Activated CD4-positive, alpha-beta T cell treated with anti-CD3 and anti-CD28 coated beads for 36 hours (primary cell): ENCODE measurements at regions of chr1 and their contacts with region 1.

Region 1: DNA sequence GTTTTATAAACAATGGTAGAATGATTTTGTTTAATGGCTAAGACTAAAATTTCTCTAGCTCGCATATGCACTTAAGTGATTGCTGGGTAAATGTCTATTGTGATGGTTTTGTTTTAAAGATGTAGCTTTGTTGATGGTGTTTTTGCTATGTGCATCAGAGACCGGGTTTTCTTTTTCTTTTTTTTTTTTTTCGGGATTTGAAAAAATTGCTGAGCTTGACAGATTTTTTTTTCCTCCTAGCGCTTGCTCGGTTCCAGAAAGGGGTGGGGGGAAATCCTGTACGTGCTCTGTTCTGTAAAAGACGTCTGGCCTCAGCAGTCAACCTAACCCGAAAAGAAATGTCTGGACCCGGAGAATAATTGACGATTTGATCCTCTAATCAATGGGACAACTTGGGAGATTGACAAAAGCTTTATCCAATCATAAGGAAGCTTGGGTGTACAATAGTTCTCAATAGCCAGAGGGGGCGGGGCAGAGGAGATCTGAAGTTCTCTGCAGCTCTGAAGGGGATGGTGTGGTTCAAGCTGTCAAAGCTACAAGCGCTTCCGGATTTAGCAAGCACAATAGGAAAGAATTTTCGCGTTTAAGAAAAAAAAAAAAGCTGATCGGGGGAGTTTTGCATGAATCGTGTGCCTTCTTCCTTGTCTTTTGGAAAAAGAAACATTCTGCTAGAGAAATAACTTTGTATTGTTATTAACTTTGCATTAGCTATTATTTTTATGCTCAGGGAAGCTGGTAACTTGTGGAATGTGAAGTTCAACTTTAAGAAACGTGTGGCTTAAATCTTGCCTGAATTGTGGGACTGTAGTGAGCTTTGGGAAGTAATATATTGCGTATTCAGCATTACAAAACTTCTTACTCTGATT is 4.5 kb upstream of the NFIA start:
- DNase-seq: peak; percentile 95
- ATAC-seq: peak; percentile 85
- H3K4me3 Mint-ChIP-seq: peak overlapping the region; percentile 83
- H3K27ac Mint-ChIP-seq: peak overlapping the region; percentile 90
- H3K4me1 Mint-ChIP-seq: peaks cover 49% of the 10 kb centered on the region
- H3K27me3 Mint-ChIP-seq: peaks cover 7% of the 10 kb centered on the region

Region 2: DNA sequence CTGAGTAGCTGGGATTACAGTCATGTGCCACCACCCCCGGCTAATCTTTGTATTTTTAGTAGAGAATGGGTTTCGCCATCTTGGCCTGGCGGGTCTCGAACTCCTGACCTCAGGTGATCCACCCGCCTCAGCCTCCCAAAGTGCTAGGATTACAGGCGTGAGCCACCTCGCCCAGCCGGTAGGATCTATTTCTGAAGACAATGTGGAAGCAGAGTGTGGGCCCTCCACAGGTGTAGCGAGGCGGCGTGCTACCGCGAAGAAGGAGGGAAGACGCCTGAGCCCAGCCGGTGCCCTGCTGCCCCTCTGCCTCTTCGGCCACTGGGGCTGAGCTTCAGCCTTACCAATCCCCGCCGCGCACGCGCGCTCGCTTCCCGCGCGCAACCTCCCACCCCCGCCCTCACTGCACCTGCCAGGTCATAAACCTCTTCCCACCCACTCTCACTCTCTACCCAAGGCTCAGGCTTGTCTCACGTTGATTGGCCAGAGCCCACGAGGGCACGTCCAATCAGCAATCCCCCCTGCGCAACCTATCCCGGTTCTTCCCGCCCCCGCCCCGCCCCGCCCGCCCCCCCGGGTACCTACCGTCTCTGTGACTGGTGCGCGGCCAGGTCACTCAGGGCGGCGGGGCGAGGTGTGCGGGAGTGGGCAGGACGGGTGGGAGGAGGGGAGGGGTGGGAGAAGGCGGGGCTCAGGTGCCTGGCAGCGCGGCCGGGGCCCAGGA is 1263.6 kb before region 1 on chr1:
- CTCF ChIA-PET with region 1: no interaction called
- POLR2A ChIA-PET with region 1: no interaction called
- intact Hi-C with region 1: loop called in 1 of 2 experiments (anchors 10 kb)
- DNase-seq: peak; percentile 92
- ATAC-seq: peak; percentile 96
- H3K4me3 Mint-ChIP-seq: no peak overlapping the region
- H3K27ac Mint-ChIP-seq: peak overlapping the region; percentile 73
- H3K4me1 Mint-ChIP-seq: peaks cover 8% of the 10 kb centered on the region
- H3K27me3 Mint-ChIP-seq: peaks cover 5% of the 10 kb centered on the region

Region 3: GRCh38 chr1:61270761-61271411 is 193.0 kb after region 1 on chr1:
- CTCF ChIA-PET with region 1: interaction called, 3 read pairs
- POLR2A ChIA-PET with region 1: interaction called, 6 read pairs
- intact Hi-C with region 1: loop called (anchors 2 kb)
- DNase-seq: peak; percentile 49
- ATAC-seq: peak; percentile 86
- H3K4me3 Mint-ChIP-seq: no peak overlapping the region
- H3K27ac Mint-ChIP-seq: peak overlapping the region; percentile 76
- H3K4me1 Mint-ChIP-seq: peaks cover 40% of the 10 kb centered on the region
- H3K27me3 Mint-ChIP-seq: peaks cover 5% of the 10 kb centered on the region

Region 4: GRCh38 chr1:61332196-61332753 is 254.4 kb after region 1 on chr1:
- CTCF ChIA-PET with region 1: no interaction called
- POLR2A ChIA-PET with region 1: no interaction called
- intact Hi-C with region 1: loop called in 1 of 2 experiments (anchors 5 kb)
- DNase-seq: peak; percentile 40
- ATAC-seq: peak; percentile 94
- H3K4me3 Mint-ChIP-seq: no peak overlapping the region
- H3K27ac Mint-ChIP-seq: peak overlapping the region; percentile 48
- H3K4me1 Mint-ChIP-seq: peaks cover 21% of the 10 kb centered on the region
- H3K27me3 Mint-ChIP-seq: peaks cover 5% of the 10 kb centered on the region

Region 5: DNA sequence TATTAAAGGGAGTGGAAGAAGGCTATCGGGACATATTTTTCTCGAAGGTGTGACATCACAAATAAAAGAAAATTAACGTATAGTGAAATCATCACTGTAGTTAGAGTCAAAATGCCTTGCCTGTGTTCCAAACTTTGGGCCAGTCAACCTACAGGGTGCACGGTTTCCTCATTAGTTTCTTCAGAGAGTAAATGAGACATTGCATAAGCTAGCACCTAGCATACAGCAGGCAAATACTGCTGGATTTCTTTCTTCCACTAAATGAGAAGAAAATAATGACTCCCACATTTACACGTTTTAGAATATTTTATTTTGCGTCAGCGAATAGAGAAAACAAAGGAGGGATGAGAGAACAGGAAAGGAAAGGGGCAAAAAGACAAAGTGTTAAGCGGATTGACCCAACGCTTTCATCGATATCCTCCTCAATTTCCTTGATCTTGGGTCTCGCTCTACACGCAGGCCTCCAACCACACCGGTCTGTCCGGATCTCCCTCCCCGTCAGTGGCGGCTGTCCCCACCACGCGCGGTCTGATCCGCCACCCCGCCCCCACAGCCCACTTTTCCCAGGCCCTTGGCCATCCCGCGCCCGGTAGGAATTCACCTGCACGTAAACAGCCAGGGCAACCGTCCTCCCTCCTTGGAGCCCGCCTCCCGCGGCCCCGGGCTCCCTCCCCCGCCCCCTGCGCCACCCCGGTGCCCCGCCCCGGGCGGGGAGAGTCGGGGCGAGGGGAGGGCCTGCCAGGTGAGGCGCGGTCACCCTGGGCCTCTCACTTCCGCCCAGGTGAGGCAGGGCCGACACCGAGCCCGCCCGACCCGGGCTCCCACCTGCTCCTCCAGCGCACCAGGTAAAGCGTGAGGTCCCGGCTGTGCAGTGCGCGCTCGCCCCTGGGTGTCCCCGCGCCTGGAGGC is 664.1 kb after region 1 on chr1 and contains the start of gene PATJ:
- CTCF ChIA-PET with region 1: no interaction called
- POLR2A ChIA-PET with region 1: no interaction called
- intact Hi-C with region 1: loop called in 1 of 2 experiments (anchors 5 kb)
- DNase-seq: peak; percentile 77
- ATAC-seq: peak; percentile 85
- H3K4me3 Mint-ChIP-seq: peak within 1 kb of the TSS; percentile 86
- H3K27ac Mint-ChIP-seq: peak within 1 kb of the TSS; percentile 92
- H3K4me1 Mint-ChIP-seq: peaks cover 24% of the 10 kb centered on the region
- H3K27me3 Mint-ChIP-seq: no peaks in the 10 kb centered on the region
- total RNA-seq, gene PATJ: 12.6 to 12.8 TPM

Region 6: DNA sequence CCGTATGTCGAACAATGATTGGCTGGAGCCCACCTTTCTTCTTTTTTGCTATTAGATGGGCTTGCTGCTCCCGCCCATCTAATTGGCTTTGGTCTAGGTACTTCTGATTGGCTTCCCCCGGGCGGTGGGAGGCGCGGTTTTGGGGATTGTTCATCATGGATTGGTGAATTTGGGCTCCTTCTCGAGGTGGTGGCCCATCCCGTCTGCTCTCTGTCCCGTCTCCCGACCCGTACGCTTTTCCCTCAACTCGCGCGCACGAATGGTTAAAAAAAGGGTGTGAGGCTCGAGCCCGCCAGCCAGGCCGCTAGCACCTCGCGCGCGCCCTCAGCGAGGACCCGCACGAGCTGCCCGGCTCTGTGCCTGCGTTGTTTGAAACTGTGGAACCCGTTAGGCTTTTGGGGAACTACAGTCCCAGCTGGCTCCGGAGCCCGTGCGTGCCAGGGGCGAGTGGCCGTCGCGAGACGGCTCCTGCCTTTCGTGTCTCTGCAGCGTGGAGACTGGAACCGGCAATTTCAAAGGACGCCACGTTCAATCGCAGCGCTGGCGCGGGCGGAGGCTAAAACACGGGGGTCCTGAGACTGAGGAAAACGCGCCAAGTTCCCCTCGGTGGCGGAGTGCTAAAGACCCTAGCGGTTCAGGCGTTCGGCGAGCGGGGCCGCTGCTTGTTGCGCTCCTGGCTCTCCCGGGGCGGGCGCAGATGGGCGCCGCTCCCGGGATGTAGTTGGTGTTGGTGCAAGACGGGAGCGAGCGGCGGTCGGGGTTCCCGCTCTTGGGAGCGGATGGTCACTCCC is 1358.8 kb after region 1 on chr1 and contains the start of gene USP1:
- CTCF ChIA-PET with region 1: no interaction called
- POLR2A ChIA-PET with region 1: no interaction called
- intact Hi-C with region 1: loop called (anchors 5 kb)
- DNase-seq: peak; percentile 99
- ATAC-seq: peak; percentile 92
- H3K4me3 Mint-ChIP-seq: peak within 1 kb of the TSS; percentile 89
- H3K27ac Mint-ChIP-seq: peak within 1 kb of the TSS; percentile 98
- H3K4me1 Mint-ChIP-seq: peaks cover 29% of the 10 kb centered on the region
- H3K27me3 Mint-ChIP-seq: no peaks in the 10 kb centered on the region
- total RNA-seq, gene USP1: 62.4 to 73.4 TPM